Activated B cell treated with CpG ODN at 0.5 μM for 24 hours (primary cell): ENCODE measurements at regions of chr3 and their contacts with region 1.

Region 1: DNA sequence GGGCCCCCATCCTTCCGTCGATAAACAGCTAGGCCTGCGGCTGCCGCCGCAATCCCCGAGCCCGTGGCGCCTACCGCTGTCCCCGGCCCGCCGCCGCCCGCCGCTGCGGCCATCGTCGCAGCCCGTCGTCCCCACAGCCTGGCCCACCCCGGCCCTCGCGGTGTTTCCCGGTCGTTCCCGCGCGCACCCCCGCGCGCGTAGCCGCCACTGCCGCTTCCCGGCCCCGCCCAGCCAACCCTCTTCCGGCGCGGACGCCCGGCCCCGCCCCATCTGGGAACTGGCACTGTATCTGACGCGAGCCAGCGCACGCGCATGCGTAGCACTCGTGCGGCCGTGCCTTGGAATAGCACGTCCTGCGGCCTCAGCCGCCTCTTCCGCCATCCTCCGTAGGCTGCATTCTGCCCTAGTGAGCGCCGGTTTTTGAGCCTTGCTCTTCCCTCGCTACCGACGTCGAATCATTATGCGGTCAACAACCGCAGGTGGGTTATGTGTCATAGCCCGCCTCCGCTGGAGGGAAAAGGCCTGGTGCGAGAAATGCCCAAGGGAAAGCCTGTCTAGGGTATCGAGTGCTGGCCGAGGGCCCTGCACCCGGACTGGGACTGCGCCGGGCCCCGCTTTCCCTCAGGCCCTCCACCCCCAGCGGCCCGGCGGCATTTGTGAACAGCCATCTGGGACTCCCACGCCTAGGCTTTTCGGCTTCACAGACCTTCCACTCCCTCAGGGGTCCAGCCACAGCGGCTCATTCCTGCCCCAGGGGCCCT is at the start of gene SMARCC1:
- DNase-seq: peak; percentile 98
- ATAC-seq: peak; percentile 84
- H3K4me3 Mint-ChIP-seq: peak within 1 kb of the TSS; percentile 93
- H3K27ac Mint-ChIP-seq: peak within 1 kb of the TSS; percentile 98
- H3K4me1 Mint-ChIP-seq: peaks cover 47% of the 10 kb centered on the region
- H3K27me3 Mint-ChIP-seq: no peaks in the 10 kb centered on the region
- CTCF ChIP-seq: no peak
- total RNA-seq, gene SMARCC1: 136 and 144 TPM in 2 replicates

Region 2: DNA sequence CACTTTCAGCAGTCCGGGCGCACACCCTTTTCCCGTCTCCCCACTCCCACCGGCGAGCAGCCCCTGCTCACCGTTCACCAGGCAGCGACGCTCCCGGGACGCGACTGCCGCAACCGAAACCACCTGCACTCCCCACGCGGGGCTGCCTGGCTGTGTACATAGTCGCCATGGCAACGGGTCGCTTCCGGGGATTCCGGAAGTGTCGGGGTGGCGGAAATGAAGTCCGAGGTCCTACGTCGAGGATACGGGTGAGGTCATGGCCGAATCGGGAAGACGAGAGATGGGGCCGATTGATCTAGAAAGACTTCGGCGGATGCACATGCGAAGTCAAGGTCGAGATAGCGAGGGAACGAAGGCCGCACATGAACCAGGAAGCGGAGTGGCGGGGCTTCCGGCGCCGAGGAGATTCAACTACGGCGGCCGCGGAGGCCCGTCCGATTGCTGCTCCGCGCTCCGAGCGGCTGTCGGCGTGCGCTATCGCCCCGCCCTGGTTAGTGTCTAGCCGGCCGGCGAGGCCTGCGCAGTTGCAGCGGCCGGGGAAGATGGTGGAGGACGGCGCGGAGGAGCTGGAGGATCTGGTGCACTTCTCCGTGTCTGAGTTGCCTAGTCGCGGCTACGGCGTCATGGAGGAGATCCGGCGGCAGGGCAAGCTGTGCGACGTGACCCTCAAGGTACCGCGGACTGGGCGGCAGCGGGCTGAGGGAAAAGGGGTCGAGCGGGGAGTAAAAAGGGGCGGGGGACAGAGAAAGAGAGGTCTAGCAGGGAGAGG is 499.3 kb before region 1 on chr3 and contains the starts of genes KIF9 and KLHL18:
- CTCF ChIA-PET with region 1: no interaction called
- POLR2A ChIA-PET with region 1: no interaction called
- intact Hi-C with region 1: loop called (anchors 5 kb)
- DNase-seq: peak; percentile 93
- ATAC-seq: peak; percentile 82
- H3K4me3 Mint-ChIP-seq: peak within 1 kb of the TSS; percentile 100
- H3K27ac Mint-ChIP-seq: peak within 1 kb of the TSS; percentile 99
- H3K4me1 Mint-ChIP-seq: peaks cover 53% of the 10 kb centered on the region
- H3K27me3 Mint-ChIP-seq: no peaks in the 10 kb centered on the region
- CTCF ChIP-seq: no peak
- total RNA-seq, gene KIF9: 2.3 and 2.5 TPM in 2 replicates
- total RNA-seq, gene KLHL18: 36.6 and 38.0 TPM in 2 replicates

Region 3: GRCh38 chr3:47522082-47522987 is 259.5 kb before region 1 on chr3:
- CTCF ChIA-PET with region 1: interaction called, 32 read pairs
- POLR2A ChIA-PET with region 1: interaction called, 3 read pairs
- intact Hi-C with region 1: no loop called
- DNase-seq: peak; percentile 55
- ATAC-seq: peak; percentile 95
- H3K4me3 Mint-ChIP-seq: no peak overlapping the region
- H3K27ac Mint-ChIP-seq: no peak overlapping the region
- H3K4me1 Mint-ChIP-seq: peaks cover 8% of the 10 kb centered on the region
- H3K27me3 Mint-ChIP-seq: no peaks in the 10 kb centered on the region
- CTCF ChIP-seq: peak; percentile 20

Region 4: GRCh38 chr3:47711596-47711995 is 70.3 kb before region 1 on chr3:
- CTCF ChIA-PET with region 1: no interaction called
- POLR2A ChIA-PET with region 1: no interaction called
- intact Hi-C with region 1: loop called (anchors 5 kb)
- DNase-seq: no peak
- ATAC-seq: no peak
- H3K4me3 Mint-ChIP-seq: no peak overlapping the region
- H3K27ac Mint-ChIP-seq: no peak overlapping the region
- H3K4me1 Mint-ChIP-seq: no peaks in the 10 kb centered on the region
- H3K27me3 Mint-ChIP-seq: no peaks in the 10 kb centered on the region
- CTCF ChIP-seq: no peak

Region 5: DNA sequence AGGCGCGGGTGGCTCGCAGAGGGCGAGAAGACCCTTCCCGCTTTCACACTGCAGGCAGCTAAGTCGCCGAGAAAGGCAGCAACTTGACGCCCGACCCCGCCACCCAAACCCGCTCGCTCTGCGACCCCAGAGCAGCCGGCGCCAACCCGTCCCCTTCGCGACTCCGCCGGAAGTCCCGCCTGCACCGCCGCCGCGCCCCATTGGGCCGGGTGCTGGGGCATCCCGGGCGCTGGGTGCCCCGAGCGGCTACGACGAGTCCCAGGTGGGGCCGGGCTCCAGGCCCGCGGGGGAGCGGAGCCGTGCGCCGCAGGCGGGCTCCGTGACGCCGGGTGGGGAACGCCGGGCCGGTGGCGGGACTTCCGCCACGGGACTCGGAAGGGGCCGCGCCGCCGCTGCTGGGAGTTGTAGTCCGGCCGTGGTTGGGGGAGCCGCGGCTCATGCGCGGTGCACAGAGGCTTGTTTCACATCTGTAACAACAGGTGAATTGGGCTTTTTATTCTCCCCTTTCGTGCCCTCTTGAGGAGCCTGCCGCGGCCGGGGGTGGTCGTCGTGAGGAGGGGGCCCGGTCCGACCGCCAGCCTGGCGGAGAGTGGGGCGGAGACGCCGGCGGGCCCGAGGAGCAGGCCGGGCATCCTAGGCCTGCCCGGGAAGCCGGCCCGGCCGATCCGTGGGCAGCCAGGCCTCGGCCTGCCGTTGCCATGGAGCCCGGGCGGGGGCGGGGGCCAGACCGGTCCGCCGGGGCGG is 21.0 kb after region 1 on chr3 and contains the start of gene DHX30:
- CTCF ChIA-PET with region 1: no interaction called
- POLR2A ChIA-PET with region 1: interaction called, 13 read pairs
- intact Hi-C with region 1: loop called (anchors 1 kb)
- DNase-seq: peak; percentile 87
- ATAC-seq: peak; percentile 93
- H3K4me3 Mint-ChIP-seq: peak within 1 kb of the TSS; percentile 93
- H3K27ac Mint-ChIP-seq: peak within 1 kb of the TSS; percentile 92
- H3K4me1 Mint-ChIP-seq: peaks cover 20% of the 10 kb centered on the region
- H3K27me3 Mint-ChIP-seq: no peaks in the 10 kb centered on the region
- CTCF ChIP-seq: no peak
- total RNA-seq, gene DHX30: 71.3 and 77.4 TPM in 2 replicates

Region 6: GRCh38 chr3:47961815-47962618 is 180.2 kb after region 1 on chr3:
- CTCF ChIA-PET with region 1: no interaction called
- POLR2A ChIA-PET with region 1: no interaction called
- intact Hi-C with region 1: no loop called
- DNase-seq: no peak
- ATAC-seq: no peak
- H3K4me3 Mint-ChIP-seq: no peak overlapping the region
- H3K27ac Mint-ChIP-seq: peak overlapping the region; percentile 37
- H3K4me1 Mint-ChIP-seq: peaks cover 30% of the 10 kb centered on the region
- H3K27me3 Mint-ChIP-seq: no peaks in the 10 kb centered on the region
- CTCF ChIP-seq: no peak

Region 7: DNA sequence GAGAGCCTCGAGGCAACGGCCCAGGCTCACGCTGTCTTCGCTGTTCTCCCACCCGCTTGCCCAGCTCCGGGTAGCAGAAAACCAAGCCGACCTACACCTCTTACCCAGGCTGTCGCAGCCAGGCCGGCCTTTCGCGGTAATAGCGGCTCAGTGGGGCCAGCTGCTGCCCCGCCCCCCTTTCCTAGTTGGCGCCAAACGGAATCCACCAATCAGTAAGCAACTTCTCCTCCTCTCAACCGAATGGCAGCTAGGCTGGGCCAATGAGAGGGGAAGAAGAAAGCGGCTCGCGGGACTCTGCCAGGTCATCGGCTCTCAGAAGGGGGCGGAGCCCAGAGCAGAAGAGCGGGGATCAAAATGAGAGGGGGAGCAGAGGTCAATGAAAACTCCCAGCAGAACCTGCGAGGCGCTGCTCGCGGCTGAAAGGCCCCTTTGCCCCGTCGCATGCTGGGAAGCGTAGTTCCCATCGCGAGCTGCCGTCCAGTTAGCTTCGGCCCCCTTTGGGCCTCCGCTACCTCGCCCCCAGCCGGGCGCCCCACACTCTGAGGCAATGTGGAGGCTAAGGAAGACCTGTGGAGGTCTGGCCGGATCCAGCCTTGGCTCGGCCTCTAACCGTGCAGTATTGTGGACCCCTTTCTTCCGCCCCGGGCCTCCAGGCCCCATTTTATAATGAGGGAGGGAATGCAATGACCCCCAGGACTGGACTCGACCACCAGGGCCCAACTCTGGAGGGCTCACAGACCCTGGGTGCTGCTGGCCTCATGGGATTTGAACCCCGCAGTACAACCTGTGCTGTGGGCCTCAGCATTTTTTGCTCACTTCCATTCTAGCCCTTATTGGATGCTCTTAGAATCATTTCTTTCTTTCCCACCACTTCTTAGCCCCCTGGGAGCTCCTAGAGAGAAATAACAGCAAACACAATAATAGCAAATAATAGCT is 406.7 kb after region 1 on chr3 and contains the start of gene CDC25A:
- CTCF ChIA-PET with region 1: no interaction called
- POLR2A ChIA-PET with region 1: no interaction called
- intact Hi-C with region 1: no loop called
- DNase-seq: peak; percentile 79
- ATAC-seq: peak; percentile 99
- H3K4me3 Mint-ChIP-seq: peak within 1 kb of the TSS; percentile 88
- H3K27ac Mint-ChIP-seq: peak within 1 kb of the TSS; percentile 80
- H3K4me1 Mint-ChIP-seq: peaks cover 13% of the 10 kb centered on the region
- H3K27me3 Mint-ChIP-seq: peaks cover 9% of the 10 kb centered on the region
- CTCF ChIP-seq: no peak
- total RNA-seq, gene CDC25A: 1.7 and 1.8 TPM in 2 replicates